K562 (cell line): ENCODE measurements at regions of chr21 and their contacts with region 1.

Region 1: DNA sequence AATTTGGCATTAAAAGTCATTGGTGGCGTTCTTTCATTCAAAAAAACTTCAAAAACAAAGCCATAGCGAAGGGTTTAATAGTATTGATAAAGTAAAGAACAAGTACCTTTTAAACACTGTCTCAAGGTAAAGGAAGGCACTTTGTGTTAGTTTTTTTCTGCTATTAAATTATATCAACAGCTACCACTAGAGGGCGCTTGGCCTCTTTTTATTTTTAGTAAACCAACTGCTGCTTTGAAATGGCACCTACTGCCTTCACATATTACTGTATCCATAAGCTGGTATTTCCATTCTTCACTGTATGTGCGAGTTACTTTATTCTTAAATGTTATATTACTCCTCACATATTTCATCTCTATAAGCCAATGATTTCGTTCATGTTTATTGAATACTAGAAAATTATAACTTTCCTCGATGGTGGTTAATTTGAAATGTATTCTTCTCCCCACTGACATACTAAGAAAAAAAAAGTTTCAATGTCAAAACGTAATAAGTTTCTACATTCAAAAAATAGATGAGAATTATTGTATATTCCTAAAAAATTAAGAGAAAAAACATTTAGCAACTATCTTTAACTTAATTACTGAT is 125.7 kb upstream of the CXADR start:
- DNase-seq: peak; percentile 41 to 71 (median 46)
- ATAC-seq: peak; percentile 71
- H3K4me3 ChIP-seq: no peak overlapping the region
- H3K27ac ChIP-seq: no peak overlapping the region
- H3K4me1 ChIP-seq: no peaks in the 10 kb centered on the region
- H3K27me3 ChIP-seq: no peaks in the 10 kb centered on the region
- CTCF ChIP-seq: peak; percentile 38 to 73 (median 53); a peak in 5 of 6 replicates
- EP300 ChIP-seq: no peak
- POLR2A ChIP-seq: no peak
- RAD21 ChIP-seq: peak; percentile 58 to 80

Region 2: GRCh38 chr21:17105953-17106352 is 281.2 kb before region 1 on chr21:
- CTCF ChIA-PET with region 1: no interaction called
- POLR2A ChIA-PET with region 1: no interaction called
- in situ Hi-C with region 1: no loop called
- intact Hi-C with region 1: no loop called
- DNase-seq: no peak
- ATAC-seq: no peak
- H3K4me3 ChIP-seq: no peak overlapping the region
- H3K27ac ChIP-seq: no peak overlapping the region
- H3K4me1 ChIP-seq: no peaks in the 10 kb centered on the region
- H3K27me3 ChIP-seq: no peaks in the 10 kb centered on the region
- CTCF ChIP-seq: no peak
- EP300 ChIP-seq: no peak
- POLR2A ChIP-seq: no peak
- RAD21 ChIP-seq: no peak

Region 3: DNA sequence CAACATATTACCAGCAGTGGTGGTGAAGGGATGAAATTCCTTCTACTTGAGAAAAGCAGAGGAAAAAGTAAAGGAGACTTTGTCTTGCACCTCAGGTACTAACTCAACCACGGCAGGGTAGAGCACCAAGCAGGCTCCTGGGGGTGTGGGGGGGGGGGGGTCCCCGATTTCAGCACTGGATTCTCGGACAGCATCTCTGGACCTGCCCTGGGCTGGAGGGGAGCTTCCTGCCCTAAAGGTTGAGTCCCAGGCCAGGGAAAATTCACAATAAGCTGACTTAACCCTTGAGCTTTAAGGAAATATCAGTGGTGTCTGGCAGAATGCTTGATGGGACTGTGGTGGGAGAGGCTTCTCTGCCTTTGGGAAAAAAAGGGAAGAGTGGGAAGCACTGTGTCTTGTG is 107.5 kb before region 1 on chr21:
- CTCF ChIA-PET with region 1: no interaction called
- POLR2A ChIA-PET with region 1: no interaction called
- in situ Hi-C with region 1: no loop called
- intact Hi-C with region 1: no loop called
- DNase-seq: no peak
- ATAC-seq: no peak
- H3K4me3 ChIP-seq: no peak overlapping the region
- H3K27ac ChIP-seq: no peak overlapping the region
- H3K4me1 ChIP-seq: no peaks in the 10 kb centered on the region
- H3K27me3 ChIP-seq: no peaks in the 10 kb centered on the region
- CTCF ChIP-seq: no peak
- EP300 ChIP-seq: no peak
- POLR2A ChIP-seq: no peak
- RAD21 ChIP-seq: no peak

Region 4: GRCh38 chr21:17554679-17555465 is 167.7 kb after region 1 on chr21:
- CTCF ChIA-PET with region 1: interaction called, 4 read pairs
- POLR2A ChIA-PET with region 1: no interaction called
- in situ Hi-C with region 1: no loop called
- intact Hi-C with region 1: loop called (anchors 10 kb)
- DNase-seq: peak in 2 of 4 experiments; percentile 8 to 10
- ATAC-seq: no peak
- H3K4me3 ChIP-seq: no peak overlapping the region
- H3K27ac ChIP-seq: no peak overlapping the region
- H3K4me1 ChIP-seq: no peaks in the 10 kb centered on the region
- H3K27me3 ChIP-seq: no peaks in the 10 kb centered on the region; a peak in 1 of 5 replicates
- CTCF ChIP-seq: peak in 2 of 3 experiments; percentile 11 to 27; a peak in 2 of 6 replicates
- EP300 ChIP-seq: no peak
- POLR2A ChIP-seq: no peak
- RAD21 ChIP-seq: peak in 1 of 2 experiments; percentile 20; a peak in 1 of 4 replicates

Region 5: DNA sequence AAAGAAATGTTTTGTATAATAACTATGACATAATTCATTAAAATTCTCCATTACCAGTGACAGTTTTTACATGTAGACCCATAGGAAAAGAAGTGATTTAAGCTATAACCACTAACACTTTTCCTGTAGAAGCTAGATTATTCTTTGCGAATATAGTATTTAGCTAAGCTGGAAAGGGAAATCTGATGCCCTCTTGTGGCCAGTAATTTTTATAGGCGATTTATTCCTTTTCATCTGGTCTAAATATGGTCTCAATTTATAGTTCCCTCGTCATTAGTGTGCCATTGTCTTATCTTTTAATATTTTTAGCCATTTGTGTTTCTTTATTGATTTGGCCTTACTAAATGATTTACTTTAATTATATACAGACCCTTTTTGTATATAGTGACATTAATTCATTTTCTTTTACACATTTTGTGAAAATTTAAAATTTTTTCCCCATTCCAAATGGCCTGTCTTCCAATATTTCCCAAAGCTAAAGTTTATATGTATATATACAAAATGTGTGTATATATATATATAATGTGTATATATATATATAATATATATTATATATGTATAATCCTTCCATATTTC is 198.8 kb after region 1 on chr21:
- CTCF ChIA-PET with region 1: interaction called, 9 read pairs
- POLR2A ChIA-PET with region 1: no interaction called
- in situ Hi-C with region 1: no loop called
- intact Hi-C with region 1: loop called (anchors 2 kb)
- DNase-seq: peak; percentile 16 to 58 (median 19)
- ATAC-seq: peak; percentile 69; the same call in 2 of the 3 replicates
- H3K4me3 ChIP-seq: no peak overlapping the region
- H3K27ac ChIP-seq: no peak overlapping the region
- H3K4me1 ChIP-seq: no peaks in the 10 kb centered on the region
- H3K27me3 ChIP-seq: peaks cover 0 to 3% of the 10 kb centered on the region in 2 experiments; a peak in 1 of 5 replicates
- CTCF ChIP-seq: peak in 2 of 3 experiments; percentile 33 to 66; a peak in 3 of 6 replicates
- EP300 ChIP-seq: no peak
- POLR2A ChIP-seq: no peak
- RAD21 ChIP-seq: peak; percentile 34 to 69

Region 6: DNA sequence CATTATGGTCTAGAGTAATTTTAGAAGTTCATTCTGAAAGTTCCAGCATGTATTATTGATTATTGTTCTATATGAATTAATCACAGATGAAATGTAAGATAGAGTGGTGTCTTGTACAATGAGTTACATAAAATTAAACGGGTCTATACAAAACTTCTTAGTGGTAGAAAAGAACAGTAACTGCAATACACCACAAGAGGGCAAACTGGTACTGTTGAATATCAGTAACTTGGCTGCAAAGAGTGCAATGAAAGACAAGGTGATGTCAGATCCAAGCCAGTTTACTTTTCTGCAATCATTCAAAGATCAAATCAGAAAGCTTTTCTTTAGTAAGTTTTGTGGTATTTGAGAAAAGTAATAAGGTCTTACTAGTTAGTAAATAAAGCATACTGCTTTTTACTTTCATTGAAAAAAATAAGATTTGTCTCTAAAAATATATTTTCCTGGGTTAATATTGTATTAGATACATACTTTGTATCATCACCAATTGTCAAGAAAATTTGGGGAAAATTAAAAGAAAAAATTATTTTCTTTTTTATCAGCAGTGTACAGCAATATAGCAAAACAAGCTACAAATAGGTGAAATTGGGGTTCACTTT is 292.0 kb after region 1 on chr21:
- CTCF ChIA-PET with region 1: no interaction called
- POLR2A ChIA-PET with region 1: no interaction called
- in situ Hi-C with region 1: no loop called
- intact Hi-C with region 1: loop called (anchors 10 kb)
- DNase-seq: peak; percentile 54 to 68 (median 64)
- ATAC-seq: peak; percentile 93
- H3K4me3 ChIP-seq: no peak overlapping the region
- H3K27ac ChIP-seq: no peak overlapping the region
- H3K4me1 ChIP-seq: no peaks in the 10 kb centered on the region
- H3K27me3 ChIP-seq: no peaks in the 10 kb centered on the region
- CTCF ChIP-seq: peak; percentile 62 to 85 (median 65); a peak in 5 of 6 replicates
- EP300 ChIP-seq: no peak
- POLR2A ChIP-seq: no peak
- RAD21 ChIP-seq: peak; percentile 91 to 97